ENCODE measurements at regions of chr13 and their contacts with region 1.

Region 1: DNA sequence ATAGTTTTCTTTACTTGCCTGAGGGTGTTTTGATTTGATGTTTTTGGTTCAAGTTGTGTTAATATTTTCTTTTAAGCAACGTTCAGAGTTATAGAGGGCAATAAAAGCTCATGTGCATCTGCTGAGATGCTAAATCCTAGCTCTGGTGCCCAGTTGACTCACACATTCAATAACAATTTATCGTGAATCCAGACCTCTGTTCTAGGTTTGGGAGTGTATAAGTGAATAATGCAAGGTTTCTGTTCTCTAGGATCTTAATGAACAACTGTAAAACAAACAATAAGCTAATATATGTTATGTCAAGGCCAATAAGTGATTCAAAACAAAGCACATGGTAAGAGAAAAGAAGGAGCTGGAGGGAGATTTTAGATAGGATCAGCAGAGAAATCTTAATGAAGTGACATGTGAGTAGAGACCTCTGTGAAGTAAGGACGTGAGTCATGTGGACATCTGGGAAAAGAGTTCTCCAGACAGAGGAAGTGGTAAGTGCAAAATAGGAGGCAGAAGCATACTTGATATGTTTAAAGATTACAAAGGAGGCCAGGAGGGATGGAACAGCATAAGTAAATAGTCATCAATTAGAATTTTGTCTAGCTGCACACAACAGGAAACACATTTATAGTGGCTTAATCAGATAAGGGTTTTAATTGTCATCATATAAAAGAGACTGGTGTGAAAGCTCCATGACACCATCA is 278.5 kb upstream of the HTR2A start:
- H3K4me3 ChIP-seq: no peak overlapping the region
- H3K27ac ChIP-seq: no peak overlapping the region
- H3K4me1 ChIP-seq: no peaks in the 10 kb centered on the region
- CTCF ChIP-seq: no peak

Region 2: DNA sequence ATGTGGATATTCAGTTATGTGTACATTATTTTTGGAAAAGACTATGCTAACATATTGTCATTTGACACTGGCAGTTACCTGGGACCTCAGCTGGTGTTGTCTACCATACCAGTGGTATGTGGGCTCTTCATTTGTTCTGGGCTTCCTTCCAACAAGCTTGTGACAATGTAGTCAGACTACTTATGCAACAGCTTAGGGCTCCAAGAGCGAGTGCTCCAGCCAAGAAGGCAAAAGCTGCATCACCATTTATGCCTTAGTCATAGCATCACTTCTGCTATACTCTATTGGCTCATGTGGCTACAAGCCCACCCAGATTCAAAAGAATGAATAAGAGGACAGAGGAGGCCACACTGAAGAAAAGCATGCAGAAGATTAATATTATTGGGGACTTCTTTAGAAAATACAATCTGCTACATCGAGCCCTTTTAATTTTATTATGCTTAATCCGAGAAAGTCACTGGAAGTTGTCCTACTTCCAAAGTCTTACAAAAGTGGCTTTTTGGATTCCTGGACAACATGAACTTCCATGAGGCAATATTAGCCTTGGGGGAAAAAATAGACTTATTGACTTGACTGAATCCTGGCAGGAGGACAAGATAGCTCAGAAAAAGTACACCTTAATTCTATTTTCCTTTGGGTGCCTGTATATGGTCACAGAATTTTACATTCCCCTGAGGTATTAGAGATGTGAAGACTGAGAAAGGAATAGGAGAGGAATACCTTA is 251.0 kb after region 1 on chr13:
- CTCF ChIA-PET with region 1: no interaction called
- POLR2A ChIA-PET with region 1: interaction called, 11 read pairs
- H3K4me3 ChIP-seq: no peak overlapping the region
- H3K27ac ChIP-seq: no peak overlapping the region
- H3K4me1 ChIP-seq: no peaks in the 10 kb centered on the region
- CTCF ChIP-seq: no peak